Gastrocnemius medialis (tissue), 4 donors: ENCODE measurements at regions of chr2 and their contacts with region 1.

Region 1: DNA sequence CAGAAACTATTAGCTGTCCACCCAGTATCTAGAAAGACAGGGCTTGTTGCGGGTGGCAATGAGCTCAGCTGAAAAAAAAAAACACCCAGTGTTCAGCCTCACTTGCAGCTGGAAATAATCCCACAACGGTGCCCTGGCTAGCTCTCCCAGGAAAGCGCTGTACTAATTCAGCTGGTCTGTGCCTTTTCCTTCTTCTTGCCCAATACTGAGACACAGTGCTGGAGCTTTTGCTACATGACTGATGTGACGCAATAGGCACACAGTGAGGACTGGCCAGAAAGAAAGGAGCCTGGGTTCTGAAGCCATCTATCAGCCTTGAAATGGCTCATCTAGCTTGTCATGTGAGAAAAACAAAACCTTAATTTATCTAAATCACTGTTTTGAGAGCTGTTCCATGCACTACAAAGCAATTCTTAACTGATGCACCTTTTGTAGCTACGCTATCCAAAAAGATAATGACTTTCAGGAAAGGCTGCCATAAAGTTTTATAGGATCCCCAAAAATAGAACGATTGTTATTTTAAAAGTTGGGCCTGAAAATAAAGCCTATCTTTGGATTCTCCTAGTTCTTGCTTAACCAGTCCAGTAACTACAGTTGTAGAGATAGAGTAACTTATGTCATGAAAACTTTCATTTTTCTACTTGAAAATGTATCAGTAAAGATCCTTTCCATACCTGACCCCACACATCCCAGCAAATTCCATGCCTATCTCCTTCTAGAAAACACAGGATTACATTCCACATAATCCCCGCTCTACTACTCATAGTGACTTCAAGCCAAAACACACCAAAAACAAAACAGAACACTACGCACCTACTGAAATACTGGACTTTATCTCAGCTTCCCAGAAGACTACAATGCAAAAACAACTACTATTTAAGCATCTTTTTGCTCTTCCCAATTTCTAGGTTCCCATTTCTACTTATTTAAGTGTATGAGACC is 15.9 kb downstream of the KIDINS220 start:
- DNase-seq: peak; percentile 87 to 94
- ATAC-seq: peak; percentile 97 to 98
- H3K4me3 ChIP-seq: no peak overlapping the region
- H3K27ac ChIP-seq: peak overlapping the region; percentile 85 to 96 (median 90)
- H3K4me1 ChIP-seq: peaks cover 27 to 29% of the 10 kb centered on the region in 2 donors
- H3K27me3 ChIP-seq: no peaks in the 10 kb centered on the region
- CTCF ChIP-seq: no peak
- POLR2A ChIP-seq: peak in 1 of 2 donors; percentile 17

Region 2: GRCh38 chr2:8794923-8795825 is 26.4 kb before region 1 on chr2:
- in situ Hi-C with region 1: no loop called
- intact Hi-C with region 1: loop called (anchors 1 kb)
- DNase-seq: peak; percentile 42 to 55
- ATAC-seq: peak; percentile 97 to 98
- H3K4me3 ChIP-seq: no peak overlapping the region
- H3K27ac ChIP-seq: peak overlapping the region; percentile 86 to 96 (median 94)
- H3K4me1 ChIP-seq: peaks cover 9 to 19% of the 10 kb centered on the region in 2 donors
- H3K27me3 ChIP-seq: no peaks in the 10 kb centered on the region
- CTCF ChIP-seq: no peak
- POLR2A ChIP-seq: no peak

Region 3: DNA sequence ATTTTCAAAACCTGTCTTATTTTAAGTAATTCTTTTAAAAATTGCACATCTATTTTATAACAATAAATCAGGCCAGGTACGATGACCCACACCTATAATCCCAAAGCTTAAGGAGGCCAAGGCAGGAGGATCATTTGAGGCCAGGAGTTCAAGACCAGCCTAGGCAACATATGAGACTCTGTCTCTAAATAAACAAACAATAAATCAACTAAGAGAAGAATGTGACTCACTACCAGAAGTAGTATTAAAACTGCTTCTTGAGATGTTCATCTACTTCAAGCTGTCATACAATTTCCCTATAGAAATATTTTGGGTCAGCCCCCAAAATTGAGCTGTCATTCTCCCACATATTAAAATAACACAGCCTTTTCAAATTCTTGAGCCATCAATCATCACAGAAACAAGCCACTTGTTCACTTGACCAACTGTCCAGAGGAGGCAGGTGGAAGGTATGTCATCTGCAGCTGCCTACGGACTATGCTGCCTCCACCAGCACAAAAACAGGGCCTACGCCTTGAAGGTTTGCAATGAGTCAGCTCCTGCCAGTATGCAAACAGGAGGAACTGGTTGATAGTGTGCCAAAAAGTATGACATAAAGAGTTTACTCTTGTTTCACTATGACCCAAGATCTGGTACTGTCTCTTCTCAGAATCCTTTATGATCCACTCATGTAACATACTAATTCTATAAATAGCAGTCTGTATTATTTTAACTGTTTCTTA is 17.7 kb before region 1 on chr2:
- in situ Hi-C with region 1: no loop called
- intact Hi-C with region 1: loop called (anchors 1 kb)
- DNase-seq: peak; percentile 84 to 92
- ATAC-seq: peak; percentile 98
- H3K4me3 ChIP-seq: no peak overlapping the region
- H3K27ac ChIP-seq: peak overlapping the region; percentile 82 to 90 (median 88)
- H3K4me1 ChIP-seq: peaks cover 28 to 31% of the 10 kb centered on the region in 2 donors
- H3K27me3 ChIP-seq: no peaks in the 10 kb centered on the region
- CTCF ChIP-seq: peak in 3 of 5 experiments; percentile 11 to 31 (median 28)
- POLR2A ChIP-seq: no peak

Region 4: GRCh38 chr2:8836971-8837794 is 15.6 kb after region 1 on chr2 and contains the start of gene KIDINS220:
- in situ Hi-C with region 1: no loop called
- intact Hi-C with region 1: loop called (anchors 2 kb)
- DNase-seq: peak; percentile 78 to 80
- ATAC-seq: peak; percentile 93 to 95
- H3K4me3 ChIP-seq: peak within 1 kb of the TSS; percentile 95 to 97 (median 96)
- H3K27ac ChIP-seq: peak within 1 kb of the TSS; percentile 88 to 97 (median 93)
- H3K4me1 ChIP-seq: peaks cover 29 to 38% of the 10 kb centered on the region in 2 donors
- H3K27me3 ChIP-seq: no peaks in the 10 kb centered on the region
- CTCF ChIP-seq: no peak
- POLR2A ChIP-seq: peak; percentile 85 to 94
- total RNA-seq, gene KIDINS220: 57.8 to 78.9 (median 59.1) TPM